AG04450 (cell line): ENCODE measurements at regions of chr9 and their contacts with region 1.

Region 1: DNA sequence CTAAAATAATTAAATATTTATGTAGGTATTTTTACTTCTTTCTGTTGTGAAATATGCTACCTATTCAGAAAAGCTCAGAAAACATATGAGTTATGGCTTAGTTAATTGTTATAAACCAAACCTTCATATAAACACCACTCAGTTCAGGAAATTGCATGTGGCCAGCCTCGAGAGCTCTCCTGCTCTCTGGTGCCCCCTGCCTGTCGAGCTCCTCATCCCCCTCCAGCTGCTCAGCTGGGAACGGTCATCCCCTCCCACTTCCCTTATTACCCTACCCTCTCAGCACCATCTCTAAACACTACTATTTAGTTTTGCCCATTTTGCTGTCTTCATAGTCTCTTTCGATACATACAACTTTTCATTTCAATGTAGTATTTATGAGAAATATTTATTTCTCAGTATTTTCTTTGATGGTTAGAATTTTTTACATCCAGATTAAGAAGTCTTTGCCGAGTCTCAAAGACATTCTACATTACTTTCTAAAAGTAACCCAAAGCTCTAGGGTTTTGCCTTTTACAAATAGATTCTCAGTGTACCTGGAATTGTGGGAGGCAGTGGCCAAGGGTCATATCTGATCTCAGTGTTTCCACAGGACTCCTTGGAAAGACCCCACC is 51.2 kb upstream of the SEMA4D start:
- DNase-seq: peak; percentile 20
- H3K4me3 ChIP-seq: no peak overlapping the region
- H3K27ac ChIP-seq: no peak overlapping the region
- H3K27me3 ChIP-seq: peaks cover 4% of the 10 kb centered on the region
- CTCF ChIP-seq: peak; percentile 94

Region 2: DNA sequence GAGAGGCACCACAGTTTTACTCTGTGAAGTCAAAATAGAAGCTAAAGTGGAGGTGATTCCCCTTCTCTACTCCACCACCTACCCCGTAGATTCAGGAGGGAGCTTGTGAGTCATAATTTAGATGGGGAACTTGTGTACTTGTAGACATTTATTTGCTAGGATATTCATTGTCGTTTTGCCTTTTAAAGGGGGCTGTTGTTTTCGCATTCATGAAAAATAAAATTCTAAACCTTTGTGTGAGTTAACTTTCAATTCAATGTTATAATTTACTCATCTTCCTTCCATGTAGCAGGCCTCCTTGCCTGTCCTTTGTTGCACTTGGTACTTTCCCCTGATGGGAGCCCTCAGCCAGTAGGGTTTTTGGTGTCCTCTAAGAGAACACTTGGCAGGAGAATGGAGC is 208.8 kb before region 1 on chr9:
- CTCF ChIA-PET with region 1: interaction called, 19 read pairs
- POLR2A ChIA-PET with region 1: no interaction called
- DNase-seq: no peak
- H3K4me3 ChIP-seq: no peak overlapping the region
- H3K27ac ChIP-seq: no peak overlapping the region
- H3K27me3 ChIP-seq: no peaks in the 10 kb centered on the region
- CTCF ChIP-seq: no peak

Region 3: GRCh38 chr9:89358985-89359384 is 190.2 kb before region 1 on chr9:
- CTCF ChIA-PET with region 1: interaction called, 20 read pairs
- POLR2A ChIA-PET with region 1: no interaction called
- DNase-seq: no peak
- H3K4me3 ChIP-seq: no peak overlapping the region
- H3K27ac ChIP-seq: no peak overlapping the region
- H3K27me3 ChIP-seq: no peaks in the 10 kb centered on the region
- CTCF ChIP-seq: no peak

Region 4: DNA sequence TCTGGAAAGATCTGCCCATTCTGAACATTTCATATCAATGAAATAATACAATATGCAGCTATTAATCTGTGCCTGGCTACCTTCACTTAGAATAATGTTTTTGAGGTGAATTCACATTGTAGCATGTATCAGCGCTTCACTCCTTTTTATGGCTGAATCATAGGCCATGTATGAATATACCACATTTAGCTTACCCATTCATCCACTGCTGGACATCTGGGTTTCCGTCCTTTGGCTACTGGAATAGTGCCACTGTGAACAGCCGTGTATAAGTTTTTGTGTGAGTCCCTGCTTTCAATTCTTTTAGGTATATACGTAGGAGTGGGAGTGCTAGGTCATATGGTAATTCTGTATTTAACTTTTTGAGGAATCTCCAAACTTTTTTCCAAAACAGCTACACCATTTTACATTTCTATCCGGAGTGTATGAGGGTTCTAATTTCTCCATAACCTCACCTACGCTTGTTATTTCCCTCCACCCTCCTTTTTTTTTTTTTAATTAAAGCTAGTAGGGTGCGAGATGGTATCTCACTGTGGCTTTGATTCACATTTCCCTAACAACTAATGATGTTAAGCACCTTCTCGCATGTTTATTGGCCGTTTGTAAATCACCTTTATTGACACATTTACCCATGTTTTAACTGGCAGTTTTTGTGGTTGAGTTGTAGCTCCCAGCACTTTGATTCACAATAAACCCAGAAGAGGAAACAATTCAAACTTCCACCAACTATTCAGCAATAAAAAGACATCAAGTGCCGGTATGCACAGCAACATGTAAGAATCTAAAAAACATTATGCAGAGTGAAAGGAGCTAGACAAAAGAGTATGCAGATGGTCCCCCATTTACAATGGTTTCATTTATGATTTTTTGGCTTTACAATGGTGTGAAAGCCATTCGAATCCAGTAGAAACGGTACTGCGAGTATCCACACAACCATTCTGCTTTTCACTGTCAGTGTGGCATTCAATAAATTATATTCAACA is 59.3 kb before region 1 on chr9:
- CTCF ChIA-PET with region 1: interaction called, 11 read pairs
- POLR2A ChIA-PET with region 1: no interaction called
- DNase-seq: no peak
- H3K4me3 ChIP-seq: no peak overlapping the region
- H3K27ac ChIP-seq: no peak overlapping the region
- H3K27me3 ChIP-seq: no peaks in the 10 kb centered on the region
- CTCF ChIP-seq: no peak

Region 5: GRCh38 chr9:89529243-89530035 is 19.7 kb before region 1 on chr9:
- CTCF ChIA-PET with region 1: interaction called, 24 read pairs
- POLR2A ChIA-PET with region 1: no interaction called
- DNase-seq: no peak
- H3K4me3 ChIP-seq: no peak overlapping the region
- H3K27ac ChIP-seq: no peak overlapping the region
- H3K27me3 ChIP-seq: peaks cover 4% of the 10 kb centered on the region
- CTCF ChIP-seq: no peak

Region 6: DNA sequence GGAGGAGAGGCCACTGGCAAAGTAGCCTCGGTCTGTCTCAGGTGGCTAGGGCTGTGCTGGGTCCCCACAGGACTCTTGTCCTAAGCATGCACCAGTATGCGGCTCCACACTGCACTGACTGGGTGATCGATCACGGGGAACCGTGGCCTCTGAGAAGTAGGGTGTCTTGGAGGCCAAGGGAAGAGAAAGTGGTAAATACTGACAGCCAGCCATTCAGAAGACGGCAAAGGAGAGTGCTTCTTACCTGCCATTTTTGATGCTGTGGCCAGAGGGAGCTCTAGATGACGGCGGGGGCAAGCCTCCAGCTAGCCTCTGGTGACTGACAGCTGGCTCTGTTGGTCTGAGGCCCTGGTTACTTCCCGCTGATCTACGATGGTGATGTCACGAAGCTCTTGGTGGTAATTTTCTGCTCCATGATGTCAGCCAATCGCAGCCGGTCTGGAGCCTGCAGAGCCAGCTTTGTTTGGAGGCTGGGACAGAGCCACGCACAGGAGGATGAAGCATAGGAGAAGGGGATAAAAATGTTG is 15.3 kb after region 1 on chr9:
- CTCF ChIA-PET with region 1: interaction called, 15 read pairs
- POLR2A ChIA-PET with region 1: no interaction called
- DNase-seq: no peak
- H3K4me3 ChIP-seq: no peak overlapping the region
- H3K27ac ChIP-seq: no peak overlapping the region
- H3K27me3 ChIP-seq: no peaks in the 10 kb centered on the region
- CTCF ChIP-seq: 0 out of 2 replicates have a peak, but pooled peaks have one; percentile 0